ENCODE measurements at regions of chr6 and their contacts with region 1.

Region 1: DNA sequence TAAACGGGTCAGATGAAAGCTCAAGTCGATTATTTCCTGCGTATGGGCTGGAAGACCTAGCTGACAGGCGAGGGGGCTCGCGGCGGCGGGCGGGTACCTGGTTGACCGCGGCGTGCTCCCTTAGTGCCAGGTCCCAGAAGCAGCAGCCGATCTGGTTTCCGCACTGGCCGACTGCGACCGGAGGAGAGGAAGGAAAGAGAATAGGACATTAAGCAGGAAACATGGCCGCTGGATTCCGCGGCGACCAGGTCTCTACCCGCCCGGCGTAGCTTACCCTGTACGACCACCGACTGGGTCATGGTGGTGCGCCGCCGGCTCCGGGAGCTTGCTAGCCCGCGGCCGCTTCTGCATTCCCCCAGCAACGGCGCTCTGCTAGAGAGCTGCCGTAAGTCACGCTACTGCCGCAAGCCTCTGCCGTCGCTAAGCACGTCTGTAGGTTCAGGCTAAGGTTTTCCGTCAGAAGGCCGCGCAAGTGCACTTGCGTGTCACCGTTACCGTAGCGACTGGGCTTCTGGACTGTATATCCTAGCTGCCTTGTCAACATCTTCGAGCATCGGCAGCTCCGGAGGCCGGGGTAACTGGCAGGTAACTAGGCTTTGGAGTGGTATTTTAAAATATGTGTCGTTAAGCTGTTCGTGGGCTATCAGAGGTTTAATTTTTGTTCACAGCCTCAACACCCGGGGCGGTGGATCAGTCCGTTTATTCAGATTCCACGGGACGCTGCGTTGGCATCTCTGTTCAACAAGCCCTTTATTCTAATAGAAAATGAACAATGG is at the starts of genes FAM229B and TUBE1:
- DNase-seq: peak; percentile 90 to 92 (median 91)
- H3K4me3 ChIP-seq: peak within 1 kb of the TSS; percentile 87 to 97 (median 92)
- H3K4me3 Mint-ChIP-seq: no peak within 1 kb of the TSS
- H3K27ac ChIP-seq: peak within 1 kb of the TSS; percentile 59 to 76
- H3K27ac Mint-ChIP-seq: no peak within 1 kb of the TSS
- H3K4me1 ChIP-seq: peaks cover 9 to 12% of the 10 kb centered on the region in 2 donors
- H3K4me1 Mint-ChIP-seq: peaks cover 4% of the 10 kb centered on the region
- H3K27me3 ChIP-seq: no peaks in the 10 kb centered on the region
- H3K27me3 Mint-ChIP-seq: peaks cover 0 to 4% (median 3%) of the 10 kb centered on the region in 3 donors
- CTCF ChIP-seq: no peak
- polyA plus RNA-seq, gene FAM229B: 0.03 to 0.64 TPM in 2 of 3 donors, not detected in the other
- polyA plus RNA-seq, gene TUBE1: 2.1 to 4.6 (median 2.7) TPM

Region 2: DNA sequence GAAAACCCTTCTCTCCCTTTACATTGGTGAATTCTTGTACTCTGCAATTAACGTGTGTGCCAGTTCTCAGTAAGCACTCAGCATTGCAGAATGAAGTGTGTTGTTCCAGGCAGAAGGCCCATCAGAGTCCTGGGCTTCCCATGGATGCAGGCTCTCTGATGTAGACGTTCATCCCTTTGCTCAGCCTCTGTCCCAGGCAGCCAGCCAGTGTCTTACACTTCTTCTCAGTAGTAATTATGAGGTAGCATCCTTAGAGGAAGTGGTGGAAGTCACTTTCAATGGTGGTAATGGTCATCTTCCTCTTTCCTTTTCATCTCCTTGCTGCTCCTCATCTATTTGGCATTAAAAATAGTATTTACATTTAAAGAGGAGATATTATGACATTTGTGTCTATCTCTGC is 147.4 kb before region 1 on chr6:
- intact Hi-C with region 1: no loop called
- DNase-seq: peak; percentile 55 to 82 (median 73)
- H3K4me3 ChIP-seq: peak overlapping the region in 1 of 3 experiments; percentile 6
- H3K4me3 Mint-ChIP-seq: peak overlapping the region; percentile 39 to 67
- H3K27ac ChIP-seq: peak overlapping the region; percentile 15 to 87
- H3K27ac Mint-ChIP-seq: peak overlapping the region; percentile 76 to 94 (median 87)
- H3K4me1 ChIP-seq: peaks cover 59 to 61% of the 10 kb centered on the region in 2 donors
- H3K4me1 Mint-ChIP-seq: peaks cover 61% of the 10 kb centered on the region
- H3K27me3 ChIP-seq: no peaks in the 10 kb centered on the region
- H3K27me3 Mint-ChIP-seq: peaks cover 0 to 2% (median 0%) of the 10 kb centered on the region in 3 donors
- CTCF ChIP-seq: no peak

Region 3: DNA sequence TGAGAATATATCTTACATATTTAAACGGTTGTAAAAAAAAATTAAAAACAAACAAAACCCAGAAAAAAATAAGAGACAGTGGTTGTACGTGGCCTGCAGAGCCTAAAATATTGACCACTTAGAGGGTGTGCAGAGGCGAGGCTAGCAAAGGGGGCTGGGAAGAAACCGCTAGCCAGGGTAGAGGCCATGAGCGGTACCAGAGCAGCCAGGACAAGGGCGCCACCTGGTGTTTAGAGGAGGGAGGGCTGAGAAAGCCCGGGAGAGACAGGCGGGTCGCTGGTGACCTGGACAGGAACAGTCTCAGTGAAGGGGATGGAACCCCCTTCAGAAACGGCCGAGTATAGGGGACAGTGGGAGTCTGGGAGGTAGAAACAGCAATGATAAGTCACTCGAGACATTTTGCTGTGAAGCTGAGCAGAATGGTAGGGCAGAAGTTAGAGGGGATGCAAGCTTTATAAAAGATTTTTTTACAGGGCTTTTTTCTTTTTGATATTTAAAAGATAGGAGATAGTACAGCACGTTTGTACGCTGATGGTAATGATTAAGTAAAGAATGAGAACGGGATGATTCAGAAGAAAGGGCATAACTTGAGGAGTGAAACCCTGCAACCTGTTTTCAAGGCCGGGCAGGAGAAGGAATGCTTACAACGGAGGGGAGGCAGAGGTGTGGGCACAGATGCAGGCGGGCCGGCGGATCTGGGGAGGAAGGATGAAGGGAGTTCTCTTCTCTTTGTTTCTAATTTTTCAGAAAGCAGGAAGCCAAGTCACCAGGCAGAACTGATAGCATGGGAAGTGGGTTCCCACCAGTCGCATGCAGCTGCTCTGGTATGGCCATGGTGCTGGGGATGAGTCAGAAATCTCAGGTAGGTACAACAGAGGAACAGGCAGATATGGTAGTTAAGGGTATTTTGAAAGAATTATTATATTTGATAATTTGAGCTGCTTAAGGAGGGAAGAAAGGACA is 76.3 kb after region 1 on chr6:
- intact Hi-C with region 1: loop called (anchors 5 to 10 kb)
- DNase-seq: peak; percentile 42 to 61 (median 58)
- H3K4me3 ChIP-seq: no peak overlapping the region
- H3K4me3 Mint-ChIP-seq: peak overlapping the region in 1 of 2 donors; percentile 79
- H3K27ac ChIP-seq: no peak overlapping the region
- H3K27ac Mint-ChIP-seq: no peak overlapping the region
- H3K4me1 ChIP-seq: peaks cover 0 to 2% of the 10 kb centered on the region in 2 donors
- H3K4me1 Mint-ChIP-seq: peaks cover 9% of the 10 kb centered on the region
- H3K27me3 ChIP-seq: peaks cover 16 to 17% of the 10 kb centered on the region in 2 donors
- H3K27me3 Mint-ChIP-seq: peaks cover 17 to 19% (median 17%) of the 10 kb centered on the region in 3 donors
- CTCF ChIP-seq: peak; percentile 85

Measured in CD14-positive monocyte (primary cell).